Activated T-helper 2 cell treated with anti-CD3 and anti-CD28 coated beads, Interferon-gamma antibody, Interleukin-2, Interleukin-4, amounts not matched to agents 10 μg/mL and 5 μg/mL and 100 μg/mL, durations not matched to agents 14 hours and 24 hours and 36 hours (primary cell): ENCODE measurements at regions of chr14 and their contacts with region 1.

Region 1: GRCh38 chr14:24431569-24432258 is 2.0 kb downstream of the KHNYN start:
- DNase-seq: peak; percentile 83
- H3K4me3 Mint-ChIP-seq: peak overlapping the region; percentile 84
- H3K27ac Mint-ChIP-seq: peak overlapping the region; percentile 91
- H3K4me1 Mint-ChIP-seq: peaks cover 30% of the 10 kb centered on the region
- H3K27me3 Mint-ChIP-seq: no peaks in the 10 kb centered on the region

Region 2: GRCh38 chr14:24241829-24242443 is 189.8 kb before region 1 on chr14:
- intact Hi-C with region 1: loop called (anchors 2 kb)
- DNase-seq: peak; percentile 93
- H3K4me3 Mint-ChIP-seq: peak overlapping the region; percentile 86
- H3K27ac Mint-ChIP-seq: peak overlapping the region; percentile 98
- H3K4me1 Mint-ChIP-seq: peaks cover 46% of the 10 kb centered on the region
- H3K27me3 Mint-ChIP-seq: no peaks in the 10 kb centered on the region

Region 3: DNA sequence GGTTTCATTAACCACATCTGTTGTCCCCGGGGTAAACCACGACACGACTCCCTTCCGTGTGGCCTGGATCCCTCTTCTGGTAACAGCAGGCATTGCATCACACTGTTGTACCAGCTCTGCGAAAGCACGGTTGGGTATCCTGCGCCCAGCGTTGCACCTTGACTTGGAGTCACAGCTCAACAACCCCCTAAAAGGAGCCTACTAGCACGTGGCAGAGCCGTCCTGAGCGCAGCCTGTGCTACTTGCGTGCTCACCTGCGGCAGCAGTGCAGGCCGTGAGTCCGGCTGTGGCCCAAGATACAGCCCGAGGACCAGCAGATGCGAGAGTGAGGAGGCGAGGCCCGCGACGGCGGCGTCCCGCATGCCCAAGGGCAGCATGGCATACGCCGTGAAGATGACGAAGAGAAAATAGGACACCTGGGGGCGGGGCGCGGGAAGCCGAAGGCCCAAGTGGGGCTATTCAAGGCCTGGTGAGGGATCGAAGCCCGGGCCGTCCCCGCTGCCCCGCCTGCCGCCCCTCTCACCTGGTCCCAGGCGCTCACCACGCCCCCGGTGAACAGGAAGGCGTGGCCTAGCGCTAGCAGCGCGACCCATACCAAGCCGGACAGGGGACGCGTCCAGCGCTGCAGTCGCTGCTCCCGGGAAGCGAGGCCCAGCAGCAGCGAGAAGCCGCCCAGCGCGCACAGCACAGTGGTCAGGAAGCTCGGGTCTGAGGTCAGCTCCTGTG is 99.3 kb before region 1 on chr14:
- intact Hi-C with region 1: loop called (anchors 1 kb)
- DNase-seq: peak; percentile 82
- H3K4me3 Mint-ChIP-seq: peak overlapping the region; percentile 66
- H3K27ac Mint-ChIP-seq: peak overlapping the region; percentile 3
- H3K4me1 Mint-ChIP-seq: peaks cover 36% of the 10 kb centered on the region
- H3K27me3 Mint-ChIP-seq: peaks cover 27% of the 10 kb centered on the region

Region 4: DNA sequence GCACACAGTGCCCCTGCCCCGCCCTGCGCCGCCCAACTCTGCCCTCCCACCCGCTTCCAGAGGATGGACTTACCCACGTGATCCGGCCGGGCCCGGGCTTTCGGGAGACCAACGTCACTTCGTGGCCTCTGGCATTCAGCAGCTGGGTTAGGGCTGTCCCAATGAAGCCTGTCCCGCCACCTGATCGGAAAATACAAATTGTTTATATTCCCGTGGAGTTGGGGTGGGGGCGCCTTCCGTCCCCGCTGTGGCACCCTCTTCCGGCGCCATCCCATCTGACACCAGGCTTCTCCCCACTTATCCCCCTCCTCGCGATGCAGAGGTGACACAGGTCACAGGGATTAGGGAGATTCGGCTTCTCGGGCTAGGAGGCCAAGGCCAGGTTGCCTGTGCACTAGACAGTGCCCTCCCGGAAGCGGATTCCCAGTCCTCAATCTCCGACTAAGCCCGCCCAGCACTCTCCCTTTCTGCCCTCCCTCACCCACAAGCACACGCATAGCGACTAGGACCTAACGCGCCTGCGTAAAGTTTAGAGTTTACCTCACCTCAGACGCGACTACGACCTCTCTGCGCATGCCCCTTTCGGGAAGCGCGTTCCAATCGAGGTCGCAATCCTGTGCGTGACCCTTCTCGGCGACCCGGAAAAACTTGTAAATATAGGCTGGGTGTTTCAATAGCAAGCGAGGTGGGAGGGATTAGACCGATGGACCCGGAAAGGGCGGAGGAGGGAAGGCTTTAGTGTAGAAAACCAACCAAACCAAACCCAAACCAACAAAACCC is 10.7 kb after region 1 on chr14 and contains the start of gene SDR39U1:
- intact Hi-C with region 1: loop called (anchors 1 kb)
- DNase-seq: peak; percentile 98
- H3K4me3 Mint-ChIP-seq: peak within 1 kb of the TSS; percentile 95
- H3K27ac Mint-ChIP-seq: peak within 1 kb of the TSS; percentile 98
- H3K4me1 Mint-ChIP-seq: peaks cover 40% of the 10 kb centered on the region
- H3K27me3 Mint-ChIP-seq: no peaks in the 10 kb centered on the region
- total RNA-seq, gene SDR39U1: 40.8 and 47.7 TPM in 2 replicates